Dendritic cell treated with granulocyte-macrophage colony-stimulating factor and Interleukin-4, amounts not matched to agents 40 ng/mL and 50 ng/mL, for 4 days (primary cell): ENCODE measurements at regions of chr5 and their contacts with region 1.

Region 1: DNA sequence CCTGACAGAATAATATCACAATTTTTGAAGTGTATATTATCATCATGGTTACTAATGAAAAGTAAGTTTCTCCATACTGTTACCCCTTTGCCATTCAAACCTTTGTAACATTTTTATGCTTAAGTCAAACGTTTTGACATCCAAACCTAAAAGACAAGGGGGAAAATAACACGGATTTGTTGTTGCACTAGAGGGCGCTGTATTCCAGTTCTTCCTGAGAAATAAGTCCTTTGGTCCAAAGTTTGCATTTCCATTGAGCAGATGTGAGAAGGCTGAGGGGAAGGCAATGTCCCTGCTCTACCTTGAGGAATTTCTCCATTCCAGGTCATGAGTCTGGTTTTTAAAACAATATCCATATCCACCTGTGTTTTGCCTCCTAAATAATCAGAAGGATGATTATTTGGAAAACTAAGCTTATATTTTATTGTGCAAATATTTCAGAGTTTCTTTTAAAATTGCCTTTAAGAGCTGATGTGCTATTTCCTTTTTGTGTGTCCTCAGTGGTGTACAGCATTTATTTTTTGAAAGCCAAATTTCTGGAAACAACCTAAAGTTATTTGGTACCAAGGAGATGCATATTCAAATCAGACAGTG is 9.7 kb downstream of the LECT2 start:
- H3K4me3 Mint-ChIP-seq: no peak overlapping the region
- H3K27ac Mint-ChIP-seq: no peak overlapping the region
- H3K4me1 Mint-ChIP-seq: peaks cover 7% of the 10 kb centered on the region
- H3K27me3 Mint-ChIP-seq: peaks cover 27% of the 10 kb centered on the region

Region 2: GRCh38 chr5:135851186-135851914 is 93.7 kb before region 1 on chr5:
- intact Hi-C with region 1: no loop called
- H3K4me3 Mint-ChIP-seq: no peak overlapping the region
- H3K27ac Mint-ChIP-seq: peak overlapping the region; percentile 34
- H3K4me1 Mint-ChIP-seq: peaks cover 67% of the 10 kb centered on the region
- H3K27me3 Mint-ChIP-seq: peaks cover 13% of the 10 kb centered on the region

Region 3: GRCh38 chr5:136062366-136063274 is 117.6 kb after region 1 on chr5:
- intact Hi-C with region 1: loop called (anchors 5 kb)
- H3K4me3 Mint-ChIP-seq: no peak overlapping the region
- H3K27ac Mint-ChIP-seq: peak overlapping the region; percentile 48
- H3K4me1 Mint-ChIP-seq: peaks cover 27% of the 10 kb centered on the region
- H3K27me3 Mint-ChIP-seq: no peaks in the 10 kb centered on the region

Region 4: DNA sequence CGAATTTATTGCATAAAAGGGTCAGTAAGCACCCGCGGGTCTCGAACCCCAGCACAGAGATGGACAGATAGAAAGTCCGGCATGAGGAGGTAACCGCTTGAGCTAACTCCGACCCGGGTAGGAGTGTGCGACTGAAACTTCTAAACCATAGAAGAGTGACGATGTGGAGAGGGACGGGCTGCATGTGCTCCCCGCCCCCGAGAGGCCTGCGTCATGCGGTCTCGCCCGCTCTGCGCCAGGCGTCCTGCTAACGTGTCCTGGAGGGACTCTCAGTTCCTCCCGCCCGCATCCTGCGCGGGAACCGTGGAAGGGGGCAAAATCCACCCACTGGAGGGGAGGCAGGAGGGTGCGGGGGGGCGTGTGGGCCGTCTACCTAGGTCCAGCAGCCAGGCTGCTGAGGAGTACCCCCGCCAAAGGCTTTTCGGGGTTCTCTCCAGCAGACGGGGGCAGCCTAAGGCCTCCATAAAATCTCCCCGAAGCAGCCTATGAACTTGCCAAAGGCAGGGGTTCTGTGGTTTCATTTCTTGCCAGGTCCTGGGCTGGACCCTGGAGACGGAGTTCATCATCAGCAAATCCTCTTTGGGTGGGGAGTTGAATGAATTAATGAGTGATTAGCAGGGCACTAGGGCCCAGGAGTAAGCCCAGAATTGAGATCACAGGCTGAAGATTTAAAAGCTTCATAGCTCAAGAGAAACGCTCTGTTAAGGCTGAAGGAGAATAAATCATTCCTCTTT is 135.6 kb after region 1 on chr5:
- intact Hi-C with region 1: loop called (anchors 1 kb)
- H3K4me3 Mint-ChIP-seq: peak overlapping the region; percentile 53
- H3K27ac Mint-ChIP-seq: peak overlapping the region; percentile 34
- H3K4me1 Mint-ChIP-seq: peaks cover 26% of the 10 kb centered on the region
- H3K27me3 Mint-ChIP-seq: peaks cover 55% of the 10 kb centered on the region

Region 5: DNA sequence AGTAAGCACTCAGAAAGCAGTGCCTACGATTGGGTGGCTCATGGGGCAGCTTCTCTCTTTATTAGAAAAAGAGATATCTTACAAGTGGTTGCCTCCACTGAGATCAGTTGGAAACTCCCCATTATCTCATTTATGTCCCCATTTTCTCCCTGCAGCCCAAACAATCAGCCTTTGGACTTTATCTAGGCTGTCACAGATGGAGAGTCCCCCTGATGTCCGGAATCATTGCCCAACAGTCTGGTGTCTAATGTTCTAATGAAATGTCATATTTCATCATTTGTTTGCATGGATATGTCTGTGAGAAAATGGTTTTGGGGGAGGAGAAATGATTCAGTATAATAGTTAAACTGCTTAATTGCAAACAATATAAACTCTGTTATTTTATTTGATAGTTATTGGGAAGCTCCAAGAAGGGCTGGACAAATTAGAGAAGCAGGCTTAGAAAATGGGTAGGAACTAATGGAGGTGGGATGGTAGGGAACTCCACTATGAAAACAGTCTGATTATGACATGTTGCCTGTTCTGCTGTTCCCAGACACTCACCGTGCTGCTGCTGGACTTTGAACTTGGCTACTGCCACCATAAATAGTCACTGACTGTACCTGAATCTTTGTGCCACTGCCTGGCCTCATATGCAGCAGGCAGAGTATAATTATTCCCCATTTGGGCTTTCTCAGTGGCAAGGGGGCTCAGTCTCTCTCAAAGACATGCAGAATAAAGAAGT is 149.3 kb after region 1 on chr5:
- intact Hi-C with region 1: no loop called
- H3K4me3 Mint-ChIP-seq: no peak overlapping the region
- H3K27ac Mint-ChIP-seq: no peak overlapping the region
- H3K4me1 Mint-ChIP-seq: peaks cover 5% of the 10 kb centered on the region
- H3K27me3 Mint-ChIP-seq: peaks cover 26% of the 10 kb centered on the region

Region 6: GRCh38 chr5:136108180-136108611 is 163.1 kb after region 1 on chr5:
- intact Hi-C with region 1: no loop called
- H3K4me3 Mint-ChIP-seq: no peak overlapping the region
- H3K27ac Mint-ChIP-seq: no peak overlapping the region
- H3K4me1 Mint-ChIP-seq: no peaks in the 10 kb centered on the region
- H3K27me3 Mint-ChIP-seq: peaks cover 2% of the 10 kb centered on the region

Region 7: GRCh38 chr5:136174021-136174659 is 229.1 kb after region 1 on chr5:
- intact Hi-C with region 1: loop called (anchors 5 kb)
- H3K4me3 Mint-ChIP-seq: no peak overlapping the region
- H3K27ac Mint-ChIP-seq: no peak overlapping the region
- H3K4me1 Mint-ChIP-seq: peaks cover under 1% of the 10 kb centered on the region
- H3K27me3 Mint-ChIP-seq: no peaks in the 10 kb centered on the region